ENCODE measurements at regions of chr2 and their contacts with region 1.

Region 1: DNA sequence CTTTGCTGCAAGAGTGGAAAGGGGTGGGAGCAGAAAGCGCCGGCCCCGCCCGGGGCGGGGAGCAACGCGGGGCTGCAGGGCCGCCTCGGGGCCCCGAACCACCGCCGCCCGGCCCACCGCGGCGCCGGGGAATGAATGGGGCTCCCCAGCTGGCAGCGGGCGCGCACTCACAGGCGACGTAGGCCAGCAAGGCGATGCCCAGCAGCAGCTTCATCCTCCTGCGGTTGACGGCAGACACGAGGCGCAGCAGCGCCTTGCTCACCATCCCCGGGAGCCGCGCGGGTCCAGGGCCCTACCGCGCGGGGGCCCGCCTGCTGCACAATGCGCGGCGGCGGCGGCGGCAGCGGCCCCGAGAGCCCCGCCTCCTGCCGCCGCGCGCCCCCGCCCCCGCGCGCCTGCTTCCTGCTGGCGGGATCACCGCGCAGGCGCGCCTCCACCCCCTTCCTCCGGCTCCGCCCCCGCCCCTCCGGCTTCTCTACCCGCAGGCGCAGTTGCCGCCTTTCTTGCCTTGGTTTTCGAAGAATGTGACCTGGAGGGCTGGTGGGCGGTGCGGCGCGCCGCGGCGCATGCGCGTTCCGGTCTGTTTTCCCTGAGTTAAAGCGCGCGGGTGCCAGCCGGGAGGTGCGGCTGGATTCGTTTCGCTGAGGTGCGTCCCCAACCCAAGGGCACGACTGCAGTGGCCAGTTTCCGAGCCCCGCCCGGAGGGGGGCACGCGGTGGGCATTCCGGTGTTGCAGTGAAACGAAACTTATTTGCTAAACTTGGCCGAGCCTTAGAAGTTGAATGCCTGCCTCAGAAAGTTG is at the start of gene UXS1:
- DNase-seq: peak; percentile 98
- ATAC-seq: peak; percentile 81
- H3K4me3 Mint-ChIP-seq: peak within 1 kb of the TSS; percentile 95
- H3K27ac Mint-ChIP-seq: peak within 1 kb of the TSS; percentile 91
- H3K4me1 Mint-ChIP-seq: peaks cover 42% of the 10 kb centered on the region
- H3K27me3 Mint-ChIP-seq: no peaks in the 10 kb centered on the region
- CTCF ChIP-seq: no peak
- total RNA-seq, gene UXS1: 20.0 and 24.2 TPM in 2 replicates

Region 2: DNA sequence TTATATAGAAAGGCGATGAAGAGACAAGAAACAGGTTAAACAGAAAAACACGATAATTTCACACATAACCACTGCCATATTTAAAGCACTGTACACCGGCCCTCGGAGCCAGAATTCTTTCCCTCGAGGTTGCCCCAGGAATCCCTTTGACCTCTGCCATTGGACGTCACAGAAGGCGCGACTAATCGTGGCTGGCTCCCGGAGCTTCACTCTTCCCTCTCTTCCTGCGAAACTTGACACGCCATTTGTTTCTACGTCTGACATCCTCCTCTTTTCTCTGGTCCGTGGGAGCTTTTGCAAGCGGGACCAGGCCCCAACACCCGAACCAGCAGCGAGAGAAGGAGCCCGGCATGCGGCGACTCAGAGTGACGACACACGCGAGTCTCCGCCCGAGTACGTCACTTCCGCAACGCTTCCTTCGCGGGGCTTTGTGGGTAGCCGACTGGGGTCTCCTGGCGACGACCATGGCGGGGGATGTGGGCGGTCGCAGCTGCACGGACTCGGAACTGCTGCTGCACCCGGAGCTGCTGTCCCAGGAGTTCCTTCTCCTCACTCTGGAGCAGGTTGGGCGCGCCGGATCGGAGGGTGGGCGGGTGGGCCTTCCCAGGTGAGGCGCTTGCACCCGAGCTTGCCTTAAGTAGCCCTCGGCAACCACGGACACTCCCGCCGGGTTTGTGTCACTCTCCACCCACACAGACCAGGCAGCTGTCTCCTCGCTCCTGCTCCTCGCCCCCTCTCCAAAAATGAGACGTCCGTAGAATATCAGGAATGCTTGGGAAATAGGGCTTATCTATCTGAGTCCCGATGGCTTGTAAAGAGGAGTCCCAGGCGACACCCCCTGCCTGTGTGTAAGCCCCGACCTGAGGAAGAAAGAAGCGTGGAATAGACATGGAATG is 856.8 kb before region 1 on chr2 and contains the start of gene C2orf49:
- CTCF ChIA-PET with region 1: no interaction called
- POLR2A ChIA-PET with region 1: no interaction called
- intact Hi-C with region 1: loop called (anchors 5 kb)
- DNase-seq: peak; percentile 89
- ATAC-seq: peak; percentile 93
- H3K4me3 Mint-ChIP-seq: peak within 1 kb of the TSS; percentile 100
- H3K27ac Mint-ChIP-seq: peak within 1 kb of the TSS; percentile 100
- H3K4me1 Mint-ChIP-seq: peaks cover 32% of the 10 kb centered on the region
- H3K27me3 Mint-ChIP-seq: no peaks in the 10 kb centered on the region
- CTCF ChIP-seq: no peak
- total RNA-seq, gene C2orf49: 20.0 and 23.8 TPM in 2 replicates

Region 3: GRCh38 chr2:106104332-106105062 is 89.7 kb before region 1 on chr2:
- CTCF ChIA-PET with region 1: interaction called, 3 read pairs
- POLR2A ChIA-PET with region 1: interaction called, 5 read pairs
- intact Hi-C with region 1: loop called (anchors 1 kb)
- DNase-seq: no peak
- ATAC-seq: peak; percentile 40
- H3K4me3 Mint-ChIP-seq: no peak overlapping the region
- H3K27ac Mint-ChIP-seq: no peak overlapping the region
- H3K4me1 Mint-ChIP-seq: peaks cover 2% of the 10 kb centered on the region
- H3K27me3 Mint-ChIP-seq: no peaks in the 10 kb centered on the region
- CTCF ChIP-seq: peak; percentile 75

Region 4: DNA sequence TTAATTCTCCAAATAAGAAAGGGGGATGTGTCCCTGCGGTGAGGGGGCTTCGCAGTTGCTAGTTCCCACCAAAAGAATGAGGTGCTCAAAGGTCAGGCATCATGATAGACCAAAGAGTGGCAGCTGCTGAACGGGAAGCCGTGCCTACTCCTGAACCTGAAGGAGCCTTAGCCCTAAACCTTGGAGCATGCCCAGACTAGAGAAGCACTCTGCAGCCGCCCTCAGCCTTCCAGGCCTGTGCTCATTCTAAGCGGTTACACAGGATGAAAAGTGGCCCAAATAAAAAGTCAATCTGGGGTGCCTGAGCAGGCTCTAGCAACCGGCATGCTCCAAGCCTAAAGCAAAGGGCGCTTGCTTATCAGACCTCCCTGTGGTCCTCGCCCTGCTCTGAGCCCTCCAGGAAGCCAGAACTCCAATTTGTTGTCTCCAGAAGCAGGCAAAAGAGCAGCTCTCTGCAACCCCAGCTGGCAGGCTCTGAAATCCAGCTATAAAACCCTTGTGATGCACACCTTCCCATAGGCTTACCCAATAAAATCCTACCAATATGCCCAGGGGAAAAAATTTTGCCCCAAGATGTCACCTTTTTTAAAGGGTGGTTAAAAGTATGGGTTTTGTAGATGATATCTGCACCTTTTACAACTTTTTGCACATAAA is 17.6 kb before region 1 on chr2:
- CTCF ChIA-PET with region 1: interaction called, 4 read pairs
- POLR2A ChIA-PET with region 1: no interaction called
- intact Hi-C with region 1: loop called (anchors 2 kb)
- DNase-seq: no peak
- ATAC-seq: no peak
- H3K4me3 Mint-ChIP-seq: no peak overlapping the region
- H3K27ac Mint-ChIP-seq: no peak overlapping the region
- H3K4me1 Mint-ChIP-seq: peaks cover 29% of the 10 kb centered on the region
- H3K27me3 Mint-ChIP-seq: no peaks in the 10 kb centered on the region
- CTCF ChIP-seq: no peak

Region 5: GRCh38 chr2:106537047-106537446 is 342.9 kb after region 1 on chr2:
- CTCF ChIA-PET with region 1: no interaction called
- POLR2A ChIA-PET with region 1: no interaction called
- intact Hi-C with region 1: loop called (anchors 1 kb)
- DNase-seq: no peak
- ATAC-seq: peak; percentile 85
- H3K4me3 Mint-ChIP-seq: no peak overlapping the region
- H3K27ac Mint-ChIP-seq: no peak overlapping the region
- H3K4me1 Mint-ChIP-seq: peaks cover 11% of the 10 kb centered on the region
- H3K27me3 Mint-ChIP-seq: peaks cover 5% of the 10 kb centered on the region
- CTCF ChIP-seq: no peak

Region 6: GRCh38 chr2:106899786-106900530 is 705.8 kb after region 1 on chr2:
- CTCF ChIA-PET with region 1: no interaction called
- POLR2A ChIA-PET with region 1: no interaction called
- intact Hi-C with region 1: no loop called
- DNase-seq: no peak
- ATAC-seq: no peak
- H3K4me3 Mint-ChIP-seq: no peak overlapping the region
- H3K27ac Mint-ChIP-seq: no peak overlapping the region
- H3K4me1 Mint-ChIP-seq: no peaks in the 10 kb centered on the region
- H3K27me3 Mint-ChIP-seq: no peaks in the 10 kb centered on the region
- CTCF ChIP-seq: no peak